SK-N-SH (cell line): ENCODE measurements at regions of chr2 and their contacts with region 1.

Region 1: GRCh38 chr2:231674587-231675338 is 33.6 kb upstream of the PTMA start:
- DNase-seq: peak; percentile 90
- H3K4me3 ChIP-seq: no peak overlapping the region
- H3K27ac ChIP-seq: no peak overlapping the region
- H3K4me1 ChIP-seq: peaks cover 0 to 12% of the 10 kb centered on the region in 2 experiments; a peak in 1 of 4 replicates
- H3K27me3 ChIP-seq: no peaks in the 10 kb centered on the region
- CTCF ChIP-seq: peak; percentile 84
- EP300 ChIP-seq: no peak
- RAD21 ChIP-seq: peak; percentile 73

Region 2: DNA sequence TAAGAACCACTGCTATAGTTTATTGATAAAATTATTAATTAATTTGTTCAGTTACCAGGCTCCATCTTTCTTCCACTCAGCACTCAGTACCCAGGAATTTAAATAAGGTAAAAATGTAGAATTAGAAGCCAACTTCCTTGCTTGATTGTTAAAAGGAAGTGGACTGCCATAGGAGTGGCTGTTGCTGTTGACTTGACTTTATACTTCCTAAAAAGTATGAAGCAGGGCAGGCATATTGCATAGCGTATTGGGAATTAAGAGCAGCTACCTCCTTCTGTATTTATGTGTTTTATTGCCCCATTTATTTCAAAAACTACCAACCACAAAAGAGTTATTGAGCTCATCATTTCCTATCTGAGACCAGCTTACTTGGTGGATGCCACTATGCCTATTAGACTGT is 590.2 kb before region 1 on chr2:
- CTCF ChIA-PET with region 1: no interaction called
- POLR2A ChIA-PET with region 1: no interaction called
- DNase-seq: no peak
- H3K4me3 ChIP-seq: no peak overlapping the region
- H3K27ac ChIP-seq: no peak overlapping the region
- H3K4me1 ChIP-seq: no peaks in the 10 kb centered on the region
- H3K27me3 ChIP-seq: no peaks in the 10 kb centered on the region
- CTCF ChIP-seq: no peak
- EP300 ChIP-seq: no peak
- RAD21 ChIP-seq: no peak

Region 3: DNA sequence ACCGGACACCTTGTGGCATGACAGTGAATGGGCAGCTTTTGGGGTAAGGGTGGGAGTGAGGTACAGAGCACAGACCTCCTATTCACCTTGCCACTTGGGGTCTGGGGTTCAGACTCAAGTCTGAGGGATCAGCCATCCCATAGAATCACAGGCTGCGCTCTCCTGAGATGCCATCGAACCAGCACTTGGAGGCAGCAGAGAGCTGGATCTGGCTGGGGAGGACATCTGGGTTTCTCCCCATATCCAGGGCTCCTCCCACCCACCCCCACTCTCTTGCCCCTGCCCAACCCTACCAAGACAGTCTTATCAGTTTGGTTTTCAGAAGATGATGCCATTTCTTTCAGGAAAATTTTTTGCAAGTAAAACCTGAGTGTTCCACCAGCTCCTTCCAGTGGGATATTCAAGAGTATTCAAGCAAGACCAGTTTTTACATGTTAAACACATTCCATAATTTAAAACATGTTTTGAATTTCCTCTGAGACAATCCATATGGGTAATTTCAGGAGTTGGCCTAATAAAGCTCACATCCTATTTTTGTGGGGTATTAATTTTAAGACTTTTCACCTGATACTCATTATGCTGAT is 111.3 kb before region 1 on chr2:
- CTCF ChIA-PET with region 1: interaction called, 84 read pairs
- POLR2A ChIA-PET with region 1: interaction called, 4 read pairs
- DNase-seq: peak; percentile 88
- H3K4me3 ChIP-seq: no peak overlapping the region; a peak in 1 of 4 replicates
- H3K27ac ChIP-seq: no peak overlapping the region
- H3K4me1 ChIP-seq: peaks cover 0 to 4% of the 10 kb centered on the region in 2 experiments; a peak in 1 of 4 replicates
- H3K27me3 ChIP-seq: no peaks in the 10 kb centered on the region
- CTCF ChIP-seq: peak; percentile 60
- EP300 ChIP-seq: no peak
- RAD21 ChIP-seq: peak; percentile 83

Region 4: GRCh38 chr2:231612179-231613053 is 62.3 kb before region 1 on chr2:
- CTCF ChIA-PET with region 1: interaction called, 256 read pairs
- POLR2A ChIA-PET with region 1: interaction called, 3 read pairs
- DNase-seq: peak; percentile 93
- H3K4me3 ChIP-seq: peak overlapping the region in 1 of 2 experiments; percentile 40; a peak in 1 of 4 replicates
- H3K27ac ChIP-seq: peak overlapping the region in 1 of 2 experiments; percentile 89; a peak in 3 of 4 replicates
- H3K4me1 ChIP-seq: peaks cover 24 to 26% of the 10 kb centered on the region in 2 experiments; a peak in 3 of 4 replicates
- H3K27me3 ChIP-seq: no peaks in the 10 kb centered on the region
- CTCF ChIP-seq: peak; percentile 97
- EP300 ChIP-seq: peak in 1 of 2 experiments; percentile 27; a peak in 1 of 4 replicates
- RAD21 ChIP-seq: peak; percentile 85

Region 5: DNA sequence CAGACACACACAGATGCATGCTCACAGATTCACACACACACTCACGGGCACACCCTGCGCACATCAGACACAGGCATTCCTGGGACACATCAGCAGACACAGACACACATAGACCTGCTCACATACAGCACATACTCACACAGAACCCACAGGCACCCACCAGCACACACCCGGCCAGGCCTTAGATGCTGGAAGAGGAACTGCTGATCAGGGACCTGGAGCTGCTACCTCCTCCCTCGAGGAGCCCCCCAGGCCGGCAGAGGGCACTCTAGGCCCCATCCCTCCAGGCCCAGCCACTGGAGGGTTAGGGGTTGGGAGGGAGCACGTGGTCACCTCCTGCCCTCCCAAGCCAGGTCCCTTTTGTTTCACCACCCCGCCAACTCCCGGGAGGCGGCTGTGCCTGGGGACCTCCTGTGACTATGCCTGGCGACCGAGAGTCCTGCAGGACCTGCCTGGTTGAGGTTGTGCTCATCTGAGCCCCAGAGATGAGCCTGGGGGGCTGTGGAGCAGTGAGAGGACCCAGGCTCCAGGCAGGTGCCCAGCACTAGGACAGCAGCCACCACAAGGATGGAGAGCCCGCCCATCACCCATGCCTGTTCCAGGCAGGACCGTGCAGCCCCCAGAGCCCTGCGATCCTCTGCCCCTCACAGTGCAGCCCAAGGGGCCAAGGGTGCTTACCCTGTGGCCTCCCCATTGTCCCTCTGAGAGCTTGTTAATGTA is 12.5 kb after region 1 on chr2:
- CTCF ChIA-PET with region 1: interaction called, 1,218 read pairs
- POLR2A ChIA-PET with region 1: no interaction called
- DNase-seq: peak; percentile 89
- H3K4me3 ChIP-seq: no peak overlapping the region
- H3K27ac ChIP-seq: peak overlapping the region in 1 of 2 experiments; percentile 3; a peak in 1 of 4 replicates
- H3K4me1 ChIP-seq: peaks cover 0 to 15% of the 10 kb centered on the region in 2 experiments; a peak in 1 of 4 replicates
- H3K27me3 ChIP-seq: no peaks in the 10 kb centered on the region
- CTCF ChIP-seq: peak; percentile 59
- EP300 ChIP-seq: no peak
- RAD21 ChIP-seq: peak; percentile 46; the same call in 1 of the 2 replicates

Region 6: DNA sequence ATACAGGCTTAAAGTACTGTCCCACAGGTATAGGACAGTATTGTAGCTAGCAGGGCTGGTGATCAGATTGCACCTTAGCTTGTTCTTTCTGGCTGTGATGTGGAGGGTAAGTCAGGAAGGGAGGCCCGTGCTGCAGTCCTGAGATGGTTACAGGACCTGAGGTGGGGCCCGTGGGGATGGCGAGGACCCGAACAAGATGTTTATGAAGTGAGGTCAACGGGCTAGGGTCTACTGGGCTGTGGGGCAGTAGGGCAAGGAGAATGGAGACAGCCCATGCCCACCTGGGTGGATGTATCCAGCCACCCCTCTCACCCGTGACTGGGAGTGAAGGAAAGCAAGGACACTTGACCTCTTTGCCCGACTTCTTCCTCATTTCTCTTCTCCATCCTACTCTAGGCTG is 51.5 kb after region 1 on chr2:
- CTCF ChIA-PET with region 1: interaction called, 1,218 read pairs
- POLR2A ChIA-PET with region 1: no interaction called
- DNase-seq: no peak
- H3K4me3 ChIP-seq: no peak overlapping the region
- H3K27ac ChIP-seq: no peak overlapping the region
- H3K4me1 ChIP-seq: no peaks in the 10 kb centered on the region; a peak in 1 of 4 replicates
- H3K27me3 ChIP-seq: no peaks in the 10 kb centered on the region
- CTCF ChIP-seq: no peak
- EP300 ChIP-seq: no peak
- RAD21 ChIP-seq: no peak

Region 7: GRCh38 chr2:232260075-232260474 is 585.3 kb after region 1 on chr2:
- CTCF ChIA-PET with region 1: no interaction called
- POLR2A ChIA-PET with region 1: no interaction called
- DNase-seq: no peak
- H3K4me3 ChIP-seq: no peak overlapping the region
- H3K27ac ChIP-seq: no peak overlapping the region
- H3K4me1 ChIP-seq: peaks cover 0 to 5% of the 10 kb centered on the region in 2 experiments; a peak in 2 of 4 replicates
- H3K27me3 ChIP-seq: no peaks in the 10 kb centered on the region
- CTCF ChIP-seq: no peak
- EP300 ChIP-seq: peak in 1 of 2 experiments; percentile 33; a peak in 1 of 4 replicates
- RAD21 ChIP-seq: no peak